ENCODE measurements at regions of chr5 and their contacts with region 1.

Region 1: DNA sequence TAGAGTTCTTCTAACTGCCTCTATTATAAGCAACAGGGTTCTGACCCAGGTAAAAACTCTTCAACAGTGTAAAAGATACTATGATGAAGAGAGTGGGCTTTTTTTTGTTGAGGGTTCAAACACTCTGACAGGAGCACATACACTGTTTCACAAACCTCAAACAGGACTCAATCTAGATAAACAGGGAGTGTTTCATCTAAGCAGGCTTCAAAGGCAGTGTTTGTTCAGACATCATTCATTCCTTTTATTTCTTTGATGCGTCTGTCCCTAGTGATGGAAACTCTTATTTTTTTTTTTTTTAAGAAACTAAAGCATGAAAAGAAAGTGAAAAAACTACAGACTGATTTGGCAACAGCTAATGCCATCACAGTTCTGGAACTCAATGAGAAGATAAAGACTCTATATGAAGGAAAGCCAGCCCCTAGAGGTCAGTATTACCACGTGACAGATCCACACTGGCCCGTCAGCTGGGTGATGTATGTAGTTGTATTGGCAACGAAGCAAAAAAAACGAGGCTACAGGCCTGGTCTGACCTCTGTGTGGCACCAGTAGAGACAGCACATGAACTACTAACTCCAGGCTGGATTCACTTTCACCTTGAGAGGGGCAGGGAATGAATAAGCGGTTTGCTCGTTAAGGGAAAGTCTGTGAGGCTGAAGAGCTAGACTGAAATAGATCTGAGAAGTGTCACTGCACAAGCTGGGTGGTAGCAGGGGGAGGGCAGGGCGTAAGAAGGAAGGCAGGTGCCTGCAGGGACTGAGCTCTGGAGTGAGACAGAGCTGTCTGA is 172.2 kb downstream of the CCDC192 start:
- DNase-seq: peak; percentile 33
- CTCF ChIP-seq: peak; percentile 54

Region 2: GRCh38 chr5:127602481-127602880 is 272.9 kb before region 1 on chr5:
- CTCF ChIA-PET with region 1: no interaction called
- POLR2A ChIA-PET with region 1: no interaction called
- DNase-seq: no peak
- CTCF ChIP-seq: no peak

Region 3: GRCh38 chr5:127892467-127893207 is 17.2 kb after region 1 on chr5:
- CTCF ChIA-PET with region 1: interaction called, 10 read pairs
- POLR2A ChIA-PET with region 1: no interaction called
- DNase-seq: no peak
- CTCF ChIP-seq: no peak